ENCODE measurements at regions of chr15 and their contacts with region 1.

Region 1: GRCh38 chr15:45378149-45378912 is at the start of gene GATM:
- DNase-seq: peak; percentile 94
- CTCF ChIP-seq: no peak

Region 2: DNA sequence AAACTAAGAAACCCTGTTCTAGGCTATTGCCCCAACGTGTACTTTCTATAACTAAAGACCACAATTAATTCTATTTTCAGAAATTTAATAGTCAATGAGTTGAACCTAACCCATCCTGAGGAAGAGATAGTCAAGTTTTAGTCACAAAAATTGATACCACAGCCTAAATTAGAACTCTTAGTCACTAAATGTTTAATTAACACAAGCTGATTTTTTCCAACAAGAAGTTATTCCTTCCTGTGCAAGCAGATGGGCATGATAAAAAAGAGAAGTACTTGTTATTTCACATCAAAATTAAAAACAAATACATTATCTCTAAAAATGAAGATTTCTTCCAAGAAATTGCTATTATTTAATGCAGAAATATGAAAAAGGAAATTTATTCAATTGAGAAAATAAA is 460.2 kb before region 1 on chr15:
- CTCF ChIA-PET with region 1: no interaction called
- POLR2A ChIA-PET with region 1: no interaction called
- DNase-seq: no peak
- CTCF ChIP-seq: no peak

Region 3: GRCh38 chr15:45355860-45356259 is 22.5 kb before region 1 on chr15:
- CTCF ChIA-PET with region 1: interaction called, 10 read pairs
- POLR2A ChIA-PET with region 1: no interaction called
- DNase-seq: no peak
- CTCF ChIP-seq: no peak

Region 4: DNA sequence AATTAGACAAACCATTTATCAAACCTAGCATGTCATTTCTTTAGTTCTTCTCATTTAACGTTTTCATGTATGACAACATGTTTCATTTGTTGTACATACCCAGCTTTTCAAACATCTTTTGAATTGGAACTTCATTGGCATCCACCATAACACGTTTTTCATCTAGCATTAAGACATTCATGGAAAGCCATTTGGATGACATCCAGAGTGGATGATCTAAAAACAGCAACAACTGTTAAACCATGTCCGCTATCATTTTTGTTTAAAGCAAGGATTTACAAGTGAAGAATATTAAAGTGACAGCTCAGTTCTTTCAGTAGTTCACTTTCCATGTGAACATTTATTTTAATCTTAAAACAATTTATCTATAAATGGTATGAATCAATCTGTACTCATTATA is 14.5 kb before region 1 on chr15:
- CTCF ChIA-PET with region 1: interaction called, 12 read pairs
- POLR2A ChIA-PET with region 1: no interaction called
- DNase-seq: no peak
- CTCF ChIP-seq: no peak

Region 5: DNA sequence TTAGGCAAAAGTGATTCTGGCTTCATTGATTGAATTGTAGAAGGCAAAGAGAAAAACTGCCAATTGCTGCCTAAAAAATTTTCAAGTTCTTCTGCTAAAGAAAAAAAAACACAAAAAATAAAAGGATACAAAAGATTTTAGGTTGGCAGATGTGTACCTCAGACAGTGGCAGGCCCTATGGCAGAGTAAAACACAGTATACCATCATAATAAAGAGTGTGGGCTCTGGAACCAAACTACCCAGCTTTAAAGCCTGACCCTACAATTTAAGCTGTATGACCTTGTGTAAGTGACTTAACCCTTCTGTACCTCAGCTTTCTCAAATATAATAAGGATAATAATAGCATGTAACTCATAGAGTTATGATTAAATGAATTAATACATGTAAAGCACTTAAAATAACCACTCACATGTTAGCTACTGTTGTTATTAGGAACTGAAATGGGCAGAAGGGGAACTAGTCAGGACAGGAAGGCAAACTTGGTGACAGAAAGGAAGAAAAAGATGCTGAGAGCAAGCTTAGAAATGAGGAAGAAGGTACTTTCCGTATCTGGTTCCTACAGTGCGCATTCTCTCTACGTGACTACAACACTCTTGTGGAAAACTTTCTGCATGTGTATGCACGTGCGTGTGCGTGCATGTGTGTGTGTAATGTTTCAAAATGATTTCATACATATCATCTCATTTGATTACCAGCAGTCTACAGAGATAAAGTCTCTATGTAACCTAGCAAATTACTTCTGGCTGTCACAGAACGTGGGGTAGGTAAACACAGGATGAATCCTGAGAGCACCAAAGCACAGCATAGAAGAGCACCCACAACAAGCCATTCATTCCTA is 13.6 kb after region 1 on chr15:
- CTCF ChIA-PET with region 1: interaction called, 59 read pairs
- POLR2A ChIA-PET with region 1: interaction called, 4 read pairs
- DNase-seq: peak; percentile 66
- CTCF ChIP-seq: no peak

Region 6: DNA sequence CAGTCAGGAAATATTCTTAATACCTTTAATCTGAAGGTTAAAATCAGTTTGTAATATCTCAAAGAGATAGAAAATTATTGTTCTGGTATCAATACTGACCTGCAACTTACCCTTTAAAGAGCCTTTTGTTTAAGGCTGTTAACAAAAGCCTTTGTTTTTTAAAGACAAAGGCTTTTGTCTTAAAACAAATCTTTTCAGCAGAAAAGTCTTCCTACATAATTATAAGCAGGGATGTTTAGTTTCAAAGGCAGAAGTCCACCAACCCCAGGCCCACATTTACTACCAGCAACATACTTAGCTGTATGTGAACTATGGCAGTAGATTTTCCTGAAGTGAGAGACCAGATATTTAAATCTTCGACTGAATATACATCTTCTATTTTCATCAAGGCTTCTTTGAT is 108.0 kb after region 1 on chr15:
- CTCF ChIA-PET with region 1: no interaction called
- POLR2A ChIA-PET with region 1: no interaction called
- DNase-seq: no peak
- CTCF ChIP-seq: no peak

Measured in GM10248 (cell line).